Activated CD4-positive, alpha-beta T cell treated with anti-CD3 and anti-CD28 coated beads for 36 hours (primary cell): ENCODE measurements at regions of chr14 and their contacts with region 1.

Region 1: GRCh38 chr14:102591889-102592763 is at the start of gene RCOR1:
- DNase-seq: peak; percentile 99
- ATAC-seq: peak; percentile 92
- H3K4me3 Mint-ChIP-seq: peak within 1 kb of the TSS; percentile 93
- H3K27ac Mint-ChIP-seq: peak within 1 kb of the TSS; percentile 92
- H3K4me1 Mint-ChIP-seq: peaks cover 33% of the 10 kb centered on the region
- H3K27me3 Mint-ChIP-seq: no peaks in the 10 kb centered on the region
- total RNA-seq, gene RCOR1: 14.8 to 15.3 TPM

Region 2: GRCh38 chr14:101035466-101036225 is 1556.5 kb before region 1 on chr14:
- CTCF ChIA-PET with region 1: no interaction called
- POLR2A ChIA-PET with region 1: no interaction called
- intact Hi-C with region 1: no loop called
- DNase-seq: no peak
- ATAC-seq: no peak
- H3K4me3 Mint-ChIP-seq: no peak overlapping the region
- H3K27ac Mint-ChIP-seq: no peak overlapping the region
- H3K4me1 Mint-ChIP-seq: no peaks in the 10 kb centered on the region
- H3K27me3 Mint-ChIP-seq: peaks cover 2% of the 10 kb centered on the region

Region 3: DNA sequence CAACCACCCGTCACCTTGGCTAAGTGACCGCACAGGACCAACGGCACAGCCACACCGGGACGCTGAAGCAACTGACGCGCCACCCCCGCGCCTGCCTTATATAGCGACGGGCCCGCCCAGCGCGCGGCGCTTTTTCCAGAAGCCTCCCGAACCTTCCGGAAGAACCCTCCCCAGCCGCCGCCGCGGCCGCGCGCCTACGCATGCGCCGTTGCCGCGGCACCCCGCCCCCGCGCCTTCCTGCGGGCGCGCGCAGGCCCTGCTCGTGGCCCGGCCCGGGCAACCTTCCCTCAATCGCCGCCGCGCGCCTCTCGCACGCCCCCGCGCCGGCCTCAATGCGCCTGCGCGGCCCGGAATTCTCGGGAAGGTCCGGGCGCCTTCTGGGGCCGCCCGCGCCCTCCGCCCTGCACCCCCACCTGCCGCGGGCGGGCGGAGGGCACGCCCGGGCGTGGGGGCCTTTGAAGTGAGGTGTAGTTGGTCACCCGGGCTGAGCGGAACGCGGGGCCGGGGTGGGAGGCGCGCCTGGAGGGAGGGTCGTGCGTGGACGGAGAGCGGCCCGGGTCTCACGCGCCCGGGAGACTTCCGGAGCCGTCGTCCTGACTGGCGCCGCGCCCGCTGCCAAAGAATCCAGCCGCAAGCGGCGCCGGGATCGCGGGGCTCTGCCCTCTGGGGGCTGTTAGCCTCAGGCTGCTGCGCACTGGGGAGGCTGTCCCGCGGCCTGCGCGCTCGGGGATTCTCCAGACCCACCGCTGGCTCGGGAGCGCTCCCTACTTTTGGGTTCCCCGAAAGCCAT is 505.0 kb before region 1 on chr14 and contains the start of gene HSP90AA1:
- CTCF ChIA-PET with region 1: no interaction called
- POLR2A ChIA-PET with region 1: no interaction called
- intact Hi-C with region 1: loop called in 1 of 2 experiments (anchors 2 kb)
- DNase-seq: peak; percentile 97
- ATAC-seq: peak; percentile 68
- H3K4me3 Mint-ChIP-seq: peak within 1 kb of the TSS; percentile 77
- H3K27ac Mint-ChIP-seq: peak within 1 kb of the TSS; percentile 92
- H3K4me1 Mint-ChIP-seq: peaks cover 46% of the 10 kb centered on the region
- H3K27me3 Mint-ChIP-seq: no peaks in the 10 kb centered on the region
- total RNA-seq, gene HSP90AA1: 1,344 to 1,372 TPM

Region 4: DNA sequence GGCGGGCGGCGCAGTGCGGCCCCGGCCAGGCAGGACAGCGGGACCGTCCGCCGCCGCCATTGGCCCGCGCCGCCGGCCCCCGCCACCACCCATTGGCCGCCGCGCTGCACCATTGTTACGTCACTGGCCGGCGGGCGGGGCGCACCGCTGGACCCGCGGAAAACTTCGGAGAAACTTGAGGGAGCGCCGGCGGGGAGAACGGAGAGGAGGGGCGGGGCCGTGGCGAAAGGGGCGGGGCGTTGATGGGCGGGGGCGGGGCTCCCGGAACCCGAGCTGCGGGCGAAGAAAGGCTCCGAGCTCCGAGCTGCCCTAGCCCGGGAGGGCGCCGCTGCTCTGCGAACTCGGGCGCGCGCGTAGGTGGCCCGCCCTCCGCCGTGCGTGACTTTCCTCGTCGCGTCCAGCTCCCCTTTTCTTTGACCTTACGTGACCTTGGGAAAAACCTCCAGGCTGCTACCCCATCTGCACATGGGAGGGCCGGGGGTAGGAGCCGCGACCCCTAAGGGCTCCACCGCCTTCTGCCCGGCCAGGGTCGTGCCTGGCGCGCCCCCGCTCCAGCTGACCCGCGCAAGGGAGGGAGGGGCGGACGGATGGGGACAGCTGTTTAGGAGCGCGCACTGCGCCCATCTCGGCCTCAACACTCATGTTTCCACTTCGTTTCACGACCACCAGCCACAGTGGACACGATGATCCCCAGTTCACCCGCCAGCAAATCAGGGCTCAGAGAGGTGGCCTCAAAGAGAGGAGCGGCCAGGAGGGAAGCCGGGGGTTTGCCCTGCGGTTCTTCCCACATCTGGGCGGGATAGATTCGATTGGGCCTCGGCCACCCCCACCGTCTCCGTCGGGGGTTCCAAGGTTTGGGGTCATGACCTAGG is 82.1 kb before region 1 on chr14 and contains the start of gene ANKRD9:
- CTCF ChIA-PET with region 1: interaction called, 3 read pairs
- POLR2A ChIA-PET with region 1: no interaction called
- intact Hi-C with region 1: loop called in 1 of 2 experiments (anchors 1 kb)
- DNase-seq: peak; percentile 95
- ATAC-seq: peak; percentile 89
- H3K4me3 Mint-ChIP-seq: peak within 1 kb of the TSS; percentile 75
- H3K27ac Mint-ChIP-seq: peak within 1 kb of the TSS; percentile 51
- H3K4me1 Mint-ChIP-seq: peaks cover 16% of the 10 kb centered on the region
- H3K27me3 Mint-ChIP-seq: peaks cover 2% of the 10 kb centered on the region
- total RNA-seq, gene ANKRD9: 4.8 to 9.3 TPM

Region 5: DNA sequence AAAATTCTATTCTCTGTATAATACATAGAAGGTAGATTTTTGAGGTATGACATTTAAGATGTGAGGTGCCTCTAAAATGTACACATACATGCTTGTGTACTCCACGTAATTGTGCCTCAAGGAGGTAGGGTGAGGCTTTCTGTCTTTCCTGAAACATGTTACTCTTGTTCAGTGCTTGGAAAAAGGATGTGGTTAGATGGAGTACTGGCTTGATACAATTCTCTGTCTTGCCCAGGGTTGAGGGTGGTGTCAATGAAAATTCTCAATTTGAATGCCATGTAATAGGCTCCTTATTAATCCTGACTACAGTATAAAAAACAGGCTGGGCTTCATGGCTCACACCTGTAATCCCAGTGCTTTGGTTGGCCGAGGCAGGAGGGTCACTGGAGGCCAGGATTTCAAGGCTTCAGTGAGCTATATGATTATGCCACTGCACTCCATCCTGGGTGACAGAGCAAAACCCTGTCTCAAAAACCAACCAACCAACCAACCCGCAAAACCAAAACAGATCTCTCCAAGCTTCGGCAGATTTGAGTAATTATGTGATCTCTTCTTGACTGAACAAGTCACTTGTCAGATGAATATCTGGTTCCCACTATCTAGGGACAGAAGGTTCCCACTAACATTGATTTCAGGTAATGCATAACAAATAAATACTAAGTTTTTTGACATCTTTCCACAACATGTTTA is 41.9 kb after region 1 on chr14:
- CTCF ChIA-PET with region 1: interaction called, 3 read pairs
- POLR2A ChIA-PET with region 1: no interaction called
- intact Hi-C with region 1: loop called in 1 of 2 experiments (anchors 2 kb)
- DNase-seq: peak; percentile 52
- ATAC-seq: peak; percentile 83
- H3K4me3 Mint-ChIP-seq: no peak overlapping the region
- H3K27ac Mint-ChIP-seq: no peak overlapping the region
- H3K4me1 Mint-ChIP-seq: peaks cover 19% of the 10 kb centered on the region
- H3K27me3 Mint-ChIP-seq: no peaks in the 10 kb centered on the region

Region 6: GRCh38 chr14:103057365-103058096 is 465.4 kb after region 1 on chr14 and contains the start of gene CDC42BPB:
- CTCF ChIA-PET with region 1: interaction called, 5 read pairs
- POLR2A ChIA-PET with region 1: no interaction called
- intact Hi-C with region 1: loop called in 1 of 2 experiments (anchors 1 kb)
- DNase-seq: peak; percentile 66
- ATAC-seq: peak; percentile 92
- H3K4me3 Mint-ChIP-seq: peak within 1 kb of the TSS; percentile 66
- H3K27ac Mint-ChIP-seq: no peak within 1 kb of the TSS
- H3K4me1 Mint-ChIP-seq: peaks cover 9% of the 10 kb centered on the region
- H3K27me3 Mint-ChIP-seq: peaks cover 17% of the 10 kb centered on the region
- total RNA-seq, gene CDC42BPB: 4.0 to 4.4 TPM

Region 7: DNA sequence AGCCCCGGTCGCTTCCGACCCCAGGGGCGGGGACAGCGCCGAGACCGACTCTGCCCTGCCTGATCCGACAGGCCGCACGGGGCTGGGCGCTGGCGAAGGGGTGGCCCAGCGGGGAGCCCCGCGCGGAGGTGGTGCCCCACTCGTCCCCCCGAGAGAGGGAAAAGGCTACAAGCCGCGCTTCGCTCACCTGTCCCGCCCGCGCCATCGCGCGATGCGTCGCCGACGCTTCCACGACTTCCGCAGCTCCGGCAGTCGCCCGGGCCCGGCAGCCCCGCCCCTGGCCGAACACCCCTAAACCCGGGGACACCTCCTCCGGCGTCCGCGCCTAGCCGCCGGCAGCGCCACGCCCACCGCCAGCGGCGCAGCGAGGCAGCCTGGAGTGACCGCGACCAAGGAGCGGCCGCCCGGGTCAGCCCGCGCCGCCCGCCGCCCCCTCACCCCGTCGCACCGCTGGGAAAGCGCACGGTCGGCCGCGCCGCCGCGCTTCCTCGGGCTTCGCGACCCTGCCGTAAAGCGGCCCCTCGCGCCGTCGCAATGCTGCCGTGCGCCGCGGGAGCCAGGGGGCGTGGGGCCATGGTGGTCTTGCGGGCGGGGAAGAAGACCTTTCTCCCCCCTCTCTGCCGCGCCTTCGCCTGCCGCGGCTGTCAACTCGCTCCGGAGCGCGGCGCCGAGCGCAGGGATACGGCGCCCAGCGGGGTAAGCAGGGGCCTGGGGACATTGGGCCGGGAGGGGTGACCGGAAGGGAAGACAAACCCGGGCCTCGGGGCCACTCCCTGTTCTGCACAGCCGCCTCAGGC is 970.5 kb after region 1 on chr14 and contains the starts of genes BAG5 and COA8:
- CTCF ChIA-PET with region 1: no interaction called
- POLR2A ChIA-PET with region 1: no interaction called
- intact Hi-C with region 1: loop called in 1 of 2 experiments (anchors 2 kb)
- DNase-seq: peak; percentile 93
- ATAC-seq: peak; percentile 78
- H3K4me3 Mint-ChIP-seq: peak within 1 kb of the TSS; percentile 94
- H3K27ac Mint-ChIP-seq: peak within 1 kb of the TSS; percentile 91
- H3K4me1 Mint-ChIP-seq: peaks cover 61% of the 10 kb centered on the region
- H3K27me3 Mint-ChIP-seq: no peaks in the 10 kb centered on the region
- total RNA-seq, gene BAG5: 24.2 to 25.1 TPM
- total RNA-seq, gene COA8: 39.6 to 41.7 TPM